Activated CD8-positive, alpha-beta T cell treated with anti-CD3 and anti-CD28 coated beads, Interleukin-2, amount 10 ng/mL, durations not matched to agents 7 days and 5 days (primary cell): ENCODE measurements at regions of chr11 and their contacts with region 1.

Region 1: DNA sequence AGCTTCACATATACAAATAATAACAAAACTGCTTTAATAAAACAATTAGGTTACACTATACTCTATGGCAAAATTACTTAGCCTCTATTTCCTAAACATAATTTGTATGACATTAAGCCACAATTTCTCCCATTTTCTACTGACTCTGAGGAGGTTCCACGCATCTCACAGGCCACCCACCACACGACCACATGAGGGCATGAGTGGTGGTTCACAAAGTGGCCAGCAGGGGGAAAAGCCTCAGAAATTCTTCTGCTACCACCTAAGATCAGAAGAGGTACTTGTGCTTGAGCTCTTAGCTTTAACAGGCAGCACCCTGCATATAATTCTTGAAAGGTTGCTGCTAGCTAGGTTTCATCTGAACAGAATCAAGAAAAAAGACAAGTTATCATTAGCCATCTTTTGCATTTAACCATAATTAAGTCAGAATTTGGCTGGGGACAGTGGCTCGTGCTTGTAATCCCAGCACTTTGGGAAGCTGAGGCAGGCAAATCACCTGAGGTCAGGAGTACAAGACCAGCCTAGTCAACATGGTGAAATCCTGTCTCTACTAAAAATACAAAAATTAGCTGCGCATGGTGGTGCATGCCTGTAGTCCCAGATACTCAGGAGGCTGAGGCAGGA is 7.7 kb downstream of the LPXN start:
- DNase-seq: peak; percentile 85
- ATAC-seq: peak; percentile 95
- H3K4me3 Mint-ChIP-seq: peak overlapping the region; percentile 37
- H3K27ac Mint-ChIP-seq: peak overlapping the region; percentile 74
- H3K4me1 Mint-ChIP-seq: peaks cover 66% of the 10 kb centered on the region
- H3K27me3 Mint-ChIP-seq: no peaks in the 10 kb centered on the region

Region 2: DNA sequence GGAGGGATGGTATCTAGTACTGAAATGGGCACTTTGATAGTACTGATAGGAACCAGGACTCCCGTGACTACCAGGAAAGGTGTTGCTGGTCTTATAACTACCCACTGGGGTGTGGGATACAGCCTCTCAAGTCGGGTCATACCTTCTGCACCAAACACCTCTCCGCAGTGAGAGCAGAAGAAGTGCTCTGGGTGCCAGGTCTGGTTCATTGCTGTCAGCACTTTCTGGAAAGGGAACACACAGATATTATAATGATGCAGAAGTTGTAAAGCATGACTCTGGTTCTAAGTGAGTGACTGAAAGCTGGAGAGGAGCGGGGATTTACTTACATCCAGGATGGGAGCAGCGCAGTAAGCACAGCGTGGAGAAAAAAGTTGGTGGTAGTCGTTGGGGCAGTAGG is 18.4 kb before region 1 on chr11:
- CTCF ChIA-PET with region 1: interaction called, 48 read pairs
- POLR2A ChIA-PET with region 1: interaction called, 6 read pairs
- DNase-seq: no peak
- ATAC-seq: no peak
- H3K4me3 Mint-ChIP-seq: no peak overlapping the region
- H3K27ac Mint-ChIP-seq: no peak overlapping the region
- H3K4me1 Mint-ChIP-seq: peaks cover 2% of the 10 kb centered on the region
- H3K27me3 Mint-ChIP-seq: no peaks in the 10 kb centered on the region

Region 3: GRCh38 chr11:58597486-58598144 is 29.6 kb after region 1 on chr11:
- CTCF ChIA-PET with region 1: interaction called, 12 read pairs
- POLR2A ChIA-PET with region 1: interaction called, 3 read pairs
- DNase-seq: no peak
- ATAC-seq: no peak
- H3K4me3 Mint-ChIP-seq: no peak overlapping the region
- H3K27ac Mint-ChIP-seq: no peak overlapping the region
- H3K4me1 Mint-ChIP-seq: peaks cover 53% of the 10 kb centered on the region
- H3K27me3 Mint-ChIP-seq: no peaks in the 10 kb centered on the region

Region 4: DNA sequence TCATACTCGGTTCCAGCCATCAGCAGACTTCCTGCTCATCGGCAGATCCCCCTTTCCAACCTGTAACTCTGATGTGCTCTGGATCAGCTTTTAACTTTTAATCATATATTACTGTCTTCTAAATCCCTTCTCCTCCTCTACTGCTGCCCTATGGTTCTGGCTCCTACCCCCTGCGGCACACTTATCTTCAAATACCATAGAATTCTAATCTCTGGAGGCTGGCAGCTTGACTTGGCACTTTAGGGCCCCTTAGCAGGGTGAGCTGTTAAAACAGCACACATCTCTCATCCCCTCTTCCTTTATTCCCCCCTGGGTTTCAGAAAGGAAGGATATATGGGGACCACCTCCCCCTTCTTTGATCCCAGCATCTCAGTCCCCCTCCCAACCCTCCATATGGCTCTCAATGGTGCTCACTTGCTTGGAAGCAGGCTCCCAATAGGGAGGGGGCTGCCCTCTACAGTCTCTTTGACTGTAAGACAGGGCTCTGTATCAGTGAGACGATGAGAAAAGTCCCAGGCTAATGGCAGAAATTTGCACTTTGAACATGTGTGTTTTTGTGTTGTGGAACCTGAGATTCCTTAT is 50.1 kb after region 1 on chr11:
- CTCF ChIA-PET with region 1: interaction called, 12 read pairs
- POLR2A ChIA-PET with region 1: no interaction called
- DNase-seq: no peak
- ATAC-seq: no peak
- H3K4me3 Mint-ChIP-seq: no peak overlapping the region
- H3K27ac Mint-ChIP-seq: peak overlapping the region; percentile 37
- H3K4me1 Mint-ChIP-seq: peaks cover 6% of the 10 kb centered on the region
- H3K27me3 Mint-ChIP-seq: no peaks in the 10 kb centered on the region